ENCODE measurements at regions of chr16 and their contacts with region 1.

Region 1: DNA sequence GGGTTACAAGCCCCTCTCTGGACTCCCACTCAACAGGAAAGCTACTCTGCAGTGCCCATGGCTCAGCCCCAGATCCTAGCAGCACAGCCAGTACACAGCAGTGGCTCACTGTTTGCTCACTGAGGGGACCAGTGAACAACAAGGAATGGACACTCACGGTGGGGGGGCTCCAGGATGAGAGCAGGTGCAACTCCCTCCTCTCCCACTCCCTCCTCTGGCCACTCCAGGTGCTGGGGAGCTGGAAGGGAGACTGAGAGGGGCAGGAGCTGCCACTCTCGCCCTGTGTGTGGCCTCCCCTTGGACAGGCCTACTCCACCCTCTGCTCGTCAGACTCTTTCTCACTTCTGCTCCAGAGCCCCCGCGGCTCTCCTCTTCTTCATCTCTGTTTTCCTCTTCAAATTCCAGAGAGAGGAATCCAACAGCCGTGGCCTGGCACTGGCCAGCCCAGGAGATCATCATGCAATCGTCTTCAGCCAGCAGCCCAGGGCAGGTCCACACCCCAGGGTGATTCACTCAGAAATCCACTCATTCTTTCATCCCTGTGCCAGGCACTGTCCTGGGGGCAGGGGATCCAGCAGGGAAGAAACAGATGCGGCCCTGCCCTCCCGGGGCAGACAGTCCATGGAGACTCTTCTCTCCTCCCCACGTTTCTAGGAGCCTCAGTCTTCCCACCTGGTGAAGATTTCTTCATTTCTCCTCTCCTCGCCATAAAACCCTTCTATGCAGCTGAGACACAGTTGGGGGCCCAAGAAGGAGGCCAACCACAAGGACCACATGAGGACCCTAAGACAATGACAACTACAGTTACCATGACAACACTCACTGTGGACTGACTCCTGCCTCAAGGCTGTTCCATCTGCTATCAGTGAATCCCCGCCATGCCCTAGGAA is 30.7 kb downstream of the CFAP20 start:
- H3K4me3 ChIP-seq: no peak overlapping the region
- H3K27ac ChIP-seq: no peak overlapping the region
- H3K4me1 ChIP-seq: no peaks in the 10 kb centered on the region
- CTCF ChIP-seq: no peak

Region 2: GRCh38 chr16:57916735-57917451 is 181.6 kb before region 1 on chr16:
- CTCF ChIA-PET with region 1: no interaction called
- POLR2A ChIA-PET with region 1: no interaction called
- H3K4me3 ChIP-seq: no peak overlapping the region
- H3K27ac ChIP-seq: no peak overlapping the region
- H3K4me1 ChIP-seq: no peaks in the 10 kb centered on the region
- CTCF ChIP-seq: no peak

Region 3: DNA sequence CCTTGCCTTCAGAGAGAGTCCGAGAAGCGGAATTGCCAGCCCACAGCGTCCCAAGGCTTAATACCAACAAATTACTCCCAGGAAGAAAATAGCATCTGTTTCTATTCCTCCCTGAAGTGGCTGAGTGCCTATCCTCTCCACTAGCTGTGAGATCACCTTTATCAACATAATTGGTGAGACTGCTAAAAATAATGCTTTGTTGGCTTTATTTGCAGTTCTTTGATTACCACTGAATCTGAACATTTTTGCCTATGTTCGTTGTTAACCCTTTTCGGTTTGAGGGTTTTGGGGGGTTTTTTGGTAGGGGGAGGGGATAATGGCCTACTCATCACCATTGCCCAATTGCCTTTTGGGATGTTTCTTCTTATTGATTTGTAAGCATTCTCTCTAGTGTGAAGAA is 41.9 kb before region 1 on chr16:
- CTCF ChIA-PET with region 1: no interaction called
- POLR2A ChIA-PET with region 1: no interaction called
- H3K4me3 ChIP-seq: no peak overlapping the region
- H3K27ac ChIP-seq: no peak overlapping the region
- H3K4me1 ChIP-seq: no peaks in the 10 kb centered on the region
- CTCF ChIP-seq: no peak

Region 4: DNA sequence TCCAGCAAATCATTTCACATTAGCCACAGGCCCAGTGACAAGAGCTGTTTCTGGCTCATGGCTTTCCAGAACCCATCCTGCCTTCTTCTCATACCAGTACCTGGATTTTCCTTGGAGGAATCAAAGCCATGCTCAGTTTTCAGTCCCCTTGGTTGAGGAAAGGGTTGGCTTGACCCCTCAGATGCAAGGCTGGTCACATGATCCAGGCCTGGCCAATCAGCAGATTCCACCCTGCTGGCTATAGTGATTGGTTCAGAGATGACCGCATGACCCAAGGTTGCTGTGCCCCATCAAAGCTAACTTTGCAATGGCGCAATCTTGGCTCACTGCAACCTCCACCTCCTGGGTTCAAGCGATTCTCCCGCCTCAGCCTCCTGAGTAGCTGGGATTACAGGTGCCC is 27.9 kb before region 1 on chr16:
- CTCF ChIA-PET with region 1: interaction called, 10 read pairs
- POLR2A ChIA-PET with region 1: no interaction called
- H3K4me3 ChIP-seq: no peak overlapping the region
- H3K27ac ChIP-seq: no peak overlapping the region
- H3K4me1 ChIP-seq: no peaks in the 10 kb centered on the region
- CTCF ChIP-seq: no peak

Region 5: GRCh38 chr16:58110571-58111301 is 12.3 kb after region 1 on chr16:
- CTCF ChIA-PET with region 1: interaction called, 28 read pairs
- POLR2A ChIA-PET with region 1: no interaction called
- H3K4me3 ChIP-seq: no peak overlapping the region
- H3K27ac ChIP-seq: no peak overlapping the region
- H3K4me1 ChIP-seq: peaks cover 4% of the 10 kb centered on the region; the same call in 1 of the 2 replicates
- CTCF ChIP-seq: no peak